Esophagus muscularis mucosa (tissue), 4 donors: ENCODE measurements at regions of chr1 and their contacts with region 1.

Region 1: GRCh38 chr1:54499360-54500106 is 48.5 kb upstream of the ACOT11 start:
- DNase-seq: no peak
- H3K4me3 ChIP-seq: peak overlapping the region; percentile 46 to 61 (median 54)
- H3K27ac ChIP-seq: peak overlapping the region in 1 of 4 donors; percentile 50
- H3K4me1 ChIP-seq: peaks cover 13 to 18% (median 17%) of the 10 kb centered on the region in 4 donors
- H3K27me3 ChIP-seq: peaks cover 0 to 17% (median 0%) of the 10 kb centered on the region in 4 donors
- CTCF ChIP-seq: peak; percentile 52 to 62 (median 55)
- EP300 ChIP-seq: no peak
- POLR2A ChIP-seq: no peak

Region 2: DNA sequence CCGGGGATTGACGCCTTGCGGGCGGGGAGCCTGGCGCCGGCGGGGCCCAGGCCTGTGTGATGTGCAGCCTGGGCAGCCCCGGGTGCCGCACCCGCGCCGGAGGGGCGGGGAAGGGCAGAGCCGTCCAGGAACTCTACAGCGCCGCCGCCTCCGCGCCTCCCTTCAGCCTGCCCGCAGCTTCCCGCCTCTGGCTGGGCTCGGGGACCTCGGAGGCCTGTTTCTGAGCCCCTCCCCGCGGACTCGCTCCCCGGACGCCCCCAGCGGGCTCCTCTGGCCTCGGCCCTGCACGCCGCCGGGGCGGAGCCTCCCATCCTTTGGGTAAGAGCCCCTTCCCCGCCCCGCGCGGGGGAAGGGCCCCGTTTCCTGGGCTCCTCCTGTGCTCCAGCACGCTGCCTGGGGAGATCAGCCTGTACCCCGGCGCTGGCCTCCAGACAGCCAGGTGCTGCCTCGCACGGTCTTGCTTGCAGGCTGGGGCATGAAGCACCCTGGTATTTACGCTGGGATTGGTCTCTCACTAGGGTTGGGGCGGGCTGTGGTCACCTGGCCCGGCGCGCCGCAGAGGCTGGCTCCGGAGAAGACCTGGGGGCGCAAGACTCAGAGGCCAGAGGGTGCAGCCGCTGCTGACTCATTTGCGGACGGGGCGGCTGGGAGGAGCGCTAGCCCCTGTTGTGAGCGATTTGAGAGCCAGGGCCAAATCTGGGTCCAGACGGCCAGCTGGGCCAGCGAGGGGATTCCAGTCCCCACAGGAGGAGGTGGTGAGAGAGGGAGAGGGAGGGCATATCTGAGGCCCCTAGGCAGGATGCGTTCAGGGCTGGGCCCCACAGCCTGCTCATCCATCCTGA is 42.8 kb after region 1 on chr1:
- intact Hi-C with region 1: loop called (anchors 5 kb)
- DNase-seq: no peak
- H3K4me3 ChIP-seq: peak overlapping the region; percentile 59 to 66 (median 62)
- H3K27ac ChIP-seq: peak overlapping the region; percentile 81 to 89 (median 84)
- H3K4me1 ChIP-seq: peaks cover 24 to 45% (median 36%) of the 10 kb centered on the region in 4 donors
- H3K27me3 ChIP-seq: no peaks in the 10 kb centered on the region
- CTCF ChIP-seq: peak; percentile 19 to 35 (median 26)
- EP300 ChIP-seq: no peak
- POLR2A ChIP-seq: no peak

Region 3: DNA sequence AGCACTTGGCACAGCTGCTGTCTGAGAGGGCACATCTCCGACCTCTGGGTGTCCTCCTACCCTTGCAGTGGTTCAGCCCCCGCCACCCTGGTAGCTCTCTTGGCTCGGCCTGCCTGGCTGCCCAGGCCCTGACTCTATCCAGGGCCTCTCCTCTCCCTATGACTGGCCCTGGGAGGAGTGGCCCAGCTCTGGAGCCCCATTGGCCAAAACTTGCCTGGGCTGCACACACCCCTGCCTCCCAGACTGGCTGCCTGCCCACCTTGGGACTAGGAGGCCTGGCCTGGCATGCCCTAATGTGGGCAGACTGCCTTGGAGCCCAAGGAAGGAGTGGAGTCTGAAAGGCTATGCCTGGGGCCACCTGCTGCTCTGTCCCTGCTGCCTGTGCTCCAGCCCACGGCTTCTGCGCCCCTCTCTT is 82.1 kb after region 1 on chr1:
- intact Hi-C with region 1: loop called (anchors 10 kb)
- DNase-seq: peak; percentile 95
- H3K4me3 ChIP-seq: no peak overlapping the region
- H3K27ac ChIP-seq: peak overlapping the region; percentile 87 to 93 (median 90)
- H3K4me1 ChIP-seq: peaks cover 61 to 73% (median 63%) of the 10 kb centered on the region in 4 donors
- H3K27me3 ChIP-seq: no peaks in the 10 kb centered on the region
- CTCF ChIP-seq: peak; percentile 16 to 44 (median 34)
- EP300 ChIP-seq: peak; percentile 60
- POLR2A ChIP-seq: no peak

Region 4: DNA sequence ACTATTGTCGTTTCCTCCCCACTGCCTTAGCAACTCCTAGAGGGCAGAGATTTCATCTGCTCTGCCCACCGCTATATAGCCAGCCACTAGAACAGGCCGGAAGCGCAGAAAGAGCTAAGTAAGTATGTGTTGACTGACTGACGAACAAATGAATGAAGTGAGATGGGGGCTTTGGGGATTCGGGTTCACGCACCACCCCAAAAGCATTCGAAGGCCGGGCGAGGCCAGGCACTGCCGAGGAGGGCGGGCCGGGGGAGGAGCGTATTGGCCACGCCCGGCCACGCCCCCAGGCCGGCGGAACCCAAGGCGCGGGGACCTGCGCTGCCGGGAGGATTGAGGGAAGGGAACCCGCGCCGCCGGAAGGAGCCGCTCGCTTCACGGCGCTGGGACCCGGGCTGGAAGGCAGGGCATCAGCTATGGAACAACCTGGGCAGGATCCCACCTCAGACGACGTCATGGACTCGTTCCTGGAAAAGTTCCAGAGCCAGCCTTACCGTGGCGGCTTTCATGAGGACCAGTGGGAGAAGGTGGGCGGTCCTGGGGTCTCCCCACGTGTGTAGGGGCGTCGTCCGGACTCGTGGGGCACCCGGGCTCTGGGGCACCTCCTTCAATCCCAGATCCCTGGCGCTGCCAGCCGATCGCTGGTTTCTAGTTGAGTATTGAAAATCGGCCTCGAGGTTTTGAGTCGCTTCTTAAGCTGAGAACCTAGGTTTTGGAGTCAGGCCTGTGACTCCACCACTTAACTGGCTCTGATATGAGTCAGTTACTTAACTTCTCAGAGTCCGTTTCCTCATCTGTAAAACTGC is 216.2 kb after region 1 on chr1 and contains the start of gene TTC4:
- intact Hi-C with region 1: loop called (anchors 10 kb)
- DNase-seq: peak; percentile 95
- H3K4me3 ChIP-seq: peak within 1 kb of the TSS; percentile 80 to 92 (median 90)
- H3K27ac ChIP-seq: peak within 1 kb of the TSS; percentile 78 to 87 (median 80)
- H3K4me1 ChIP-seq: peaks cover 15 to 30% (median 22%) of the 10 kb centered on the region in 4 donors
- H3K27me3 ChIP-seq: no peaks in the 10 kb centered on the region
- CTCF ChIP-seq: peak in 2 of 3 experiments; percentile 10 to 14
- EP300 ChIP-seq: no peak
- POLR2A ChIP-seq: peak; percentile 38
- total RNA-seq, gene TTC4: 10.8 to 16.4 (median 13.8) TPM

Region 5: GRCh38 chr1:54810100-54810942 is 310.8 kb after region 1 on chr1:
- intact Hi-C with region 1: loop called (anchors 5 kb)
- DNase-seq: no peak
- H3K4me3 ChIP-seq: no peak overlapping the region
- H3K27ac ChIP-seq: no peak overlapping the region
- H3K4me1 ChIP-seq: peaks cover 0 to 4% (median 0%) of the 10 kb centered on the region in 4 donors
- H3K27me3 ChIP-seq: peaks cover 0 to 20% (median 0%) of the 10 kb centered on the region in 4 donors
- CTCF ChIP-seq: peak; percentile 65 to 78 (median 77)
- EP300 ChIP-seq: no peak
- POLR2A ChIP-seq: no peak